Activated CD8-positive, alpha-beta memory T cell treated with anti-CD3 and anti-CD28 coated beads, Interleukin-2, amount 10 ng/mL, durations not matched to agents 7 days and 5 days (primary cell): ENCODE measurements at regions of chr10 and their contacts with region 1.

Region 1: DNA sequence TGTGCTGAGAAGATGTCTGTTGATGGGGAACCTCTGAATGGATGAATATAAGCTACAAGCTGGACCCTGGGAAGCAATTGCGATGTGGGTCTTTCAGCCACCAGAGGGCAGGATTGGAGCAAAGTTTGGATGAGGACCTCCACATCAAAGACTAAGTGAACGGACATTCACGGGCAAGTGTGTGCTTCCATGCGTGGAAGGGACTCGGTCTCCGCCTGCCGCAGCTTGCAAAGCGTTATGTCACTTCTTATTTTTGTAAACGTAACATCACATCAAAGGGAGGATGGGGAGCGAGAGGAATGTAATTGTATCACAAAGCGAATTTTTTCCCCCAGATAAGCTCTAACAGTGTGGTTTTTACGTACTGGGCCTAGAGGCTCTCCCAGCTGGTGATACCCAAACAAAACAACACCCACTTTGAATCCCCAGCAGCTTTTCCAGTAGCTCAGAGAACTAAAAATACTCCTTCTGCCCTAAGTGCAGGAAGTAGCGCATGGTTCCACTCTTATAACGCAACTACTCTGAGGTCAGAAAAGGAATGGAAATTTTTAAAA is 65.0 kb downstream of the VWA2 start:
- DNase-seq: peak; percentile 88
- ATAC-seq: peak; percentile 70
- H3K4me3 Mint-ChIP-seq: peak overlapping the region; percentile 81
- H3K27ac Mint-ChIP-seq: peak overlapping the region; percentile 84
- H3K4me1 Mint-ChIP-seq: peaks cover 10% of the 10 kb centered on the region
- H3K27me3 Mint-ChIP-seq: no peaks in the 10 kb centered on the region

Region 2: GRCh38 chr10:114403541-114404161 is 99.6 kb after region 1 on chr10:
- CTCF ChIA-PET with region 1: interaction called, 11 read pairs
- DNase-seq: no peak
- ATAC-seq: peak; percentile 55
- H3K4me3 Mint-ChIP-seq: no peak overlapping the region
- H3K27ac Mint-ChIP-seq: no peak overlapping the region
- H3K4me1 Mint-ChIP-seq: peaks cover 9% of the 10 kb centered on the region
- H3K27me3 Mint-ChIP-seq: peaks cover 74% of the 10 kb centered on the region

Region 3: DNA sequence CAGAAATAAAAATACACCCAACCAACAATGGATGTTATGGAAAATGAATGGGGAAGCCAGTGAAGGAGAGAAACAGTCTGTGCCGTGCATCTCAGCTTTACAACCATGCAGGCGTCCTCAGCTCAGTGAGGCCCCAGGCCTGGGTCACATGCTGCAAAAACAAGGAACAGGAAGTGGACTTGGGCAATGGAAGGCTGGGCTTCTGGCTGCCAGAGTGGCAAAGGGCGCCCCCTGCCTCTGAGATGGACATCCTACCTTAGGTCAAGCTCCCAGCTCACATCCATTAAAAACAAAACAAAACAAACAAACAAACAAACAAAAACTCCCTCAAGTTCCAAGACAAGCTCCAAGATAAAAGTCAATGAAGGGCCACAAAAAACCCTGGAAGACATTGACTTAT is 154.9 kb after region 1 on chr10:
- CTCF ChIA-PET with region 1: interaction called, 50 read pairs
- DNase-seq: peak; percentile 61
- ATAC-seq: peak; percentile 64
- H3K4me3 Mint-ChIP-seq: no peak overlapping the region
- H3K27ac Mint-ChIP-seq: no peak overlapping the region
- H3K4me1 Mint-ChIP-seq: peaks cover 10% of the 10 kb centered on the region
- H3K27me3 Mint-ChIP-seq: no peaks in the 10 kb centered on the region

Region 4: DNA sequence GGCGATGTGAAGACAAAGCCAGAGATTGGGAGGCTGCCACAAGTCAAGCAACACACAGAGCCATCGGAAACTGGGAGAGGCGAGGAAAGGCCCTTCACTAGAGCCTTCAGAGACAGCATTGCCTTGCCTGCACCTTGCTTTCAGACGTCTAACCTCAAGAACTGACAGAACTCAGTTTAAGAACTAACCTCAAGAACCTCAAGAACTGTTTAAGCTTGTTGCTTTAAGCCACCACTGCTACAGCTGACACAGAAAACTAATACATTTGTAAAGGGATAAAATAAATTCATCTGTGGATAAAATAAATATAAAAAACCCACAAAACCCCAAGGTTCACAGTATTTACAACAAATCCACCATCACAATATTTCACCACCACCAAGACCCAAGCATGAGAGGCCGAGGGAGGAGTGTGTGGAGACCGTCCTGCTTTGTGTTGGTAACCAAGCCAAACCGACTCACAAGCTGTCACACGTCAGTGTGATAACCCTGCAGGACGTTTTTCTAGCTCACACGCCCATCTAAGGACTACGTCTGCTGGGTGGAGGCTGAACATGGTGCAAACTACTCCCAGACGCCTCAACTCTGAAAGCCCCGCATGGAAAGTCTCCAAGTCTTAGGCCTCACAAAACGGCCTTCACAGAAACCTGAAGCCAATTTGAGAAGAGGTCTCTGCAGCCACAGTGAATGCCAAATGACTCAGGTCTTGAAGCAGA is 237.1 kb after region 1 on chr10:
- CTCF ChIA-PET with region 1: interaction called, 34 read pairs
- DNase-seq: peak; percentile 92
- ATAC-seq: peak; percentile 84
- H3K4me3 Mint-ChIP-seq: peak overlapping the region; percentile 40
- H3K27ac Mint-ChIP-seq: peak overlapping the region; percentile 100
- H3K4me1 Mint-ChIP-seq: peaks cover 82% of the 10 kb centered on the region
- H3K27me3 Mint-ChIP-seq: no peaks in the 10 kb centered on the region

Region 5: GRCh38 chr10:114703377-114704107 is 399.4 kb after region 1 on chr10:
- CTCF ChIA-PET with region 1: interaction called, 10 read pairs
- DNase-seq: no peak
- ATAC-seq: peak; percentile 42
- H3K4me3 Mint-ChIP-seq: no peak overlapping the region
- H3K27ac Mint-ChIP-seq: no peak overlapping the region
- H3K4me1 Mint-ChIP-seq: no peaks in the 10 kb centered on the region
- H3K27me3 Mint-ChIP-seq: peaks cover 53% of the 10 kb centered on the region